Mucosa of descending colon (tissue), 3 donors: ENCODE measurements at regions of chr22 and their contacts with region 1.

Region 1: GRCh38 chr22:30265823-30266444 is 717 bp downstream of the OSM start:
- DNase-seq: peak in 2 of 3 donors; percentile 69 to 89
- ATAC-seq: peak; percentile 71
- H3K4me3 ChIP-seq: no peak overlapping the region
- H3K4me1 ChIP-seq: peaks cover 6% of the 10 kb centered on the region
- CTCF ChIP-seq: no peak

Region 2: DNA sequence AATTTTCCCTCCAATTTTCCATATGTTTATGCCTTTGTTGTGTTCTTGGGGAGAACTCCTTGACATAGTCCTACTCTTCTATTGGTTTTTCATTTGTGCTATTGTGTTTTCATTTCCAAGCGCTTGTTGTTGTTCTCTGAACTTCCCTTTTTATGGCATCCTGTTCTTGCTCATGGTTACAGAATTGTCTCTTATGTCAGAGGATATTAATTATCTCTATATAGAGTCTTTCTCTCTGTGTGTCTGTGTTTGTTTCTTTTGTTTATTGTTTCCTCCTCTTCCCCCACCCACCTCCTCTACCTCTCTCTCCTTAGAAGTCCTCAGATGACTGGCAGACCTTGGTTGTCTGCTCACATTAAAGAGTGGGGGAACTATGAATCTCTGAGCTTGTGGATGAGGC is 115.7 kb before region 1 on chr22:
- intact Hi-C with region 1: no loop called
- DNase-seq: no peak
- ATAC-seq: no peak
- H3K4me3 ChIP-seq: no peak overlapping the region
- H3K4me1 ChIP-seq: no peaks in the 10 kb centered on the region
- CTCF ChIP-seq: no peak

Region 3: GRCh38 chr22:30381264-30381663 is 115.3 kb after region 1 on chr22:
- intact Hi-C with region 1: loop called in 1 of 2 experiments (anchors 5 kb)
- DNase-seq: no peak
- ATAC-seq: no peak
- H3K4me3 ChIP-seq: no peak overlapping the region
- H3K4me1 ChIP-seq: peaks cover 2% of the 10 kb centered on the region
- CTCF ChIP-seq: no peak

Region 4: DNA sequence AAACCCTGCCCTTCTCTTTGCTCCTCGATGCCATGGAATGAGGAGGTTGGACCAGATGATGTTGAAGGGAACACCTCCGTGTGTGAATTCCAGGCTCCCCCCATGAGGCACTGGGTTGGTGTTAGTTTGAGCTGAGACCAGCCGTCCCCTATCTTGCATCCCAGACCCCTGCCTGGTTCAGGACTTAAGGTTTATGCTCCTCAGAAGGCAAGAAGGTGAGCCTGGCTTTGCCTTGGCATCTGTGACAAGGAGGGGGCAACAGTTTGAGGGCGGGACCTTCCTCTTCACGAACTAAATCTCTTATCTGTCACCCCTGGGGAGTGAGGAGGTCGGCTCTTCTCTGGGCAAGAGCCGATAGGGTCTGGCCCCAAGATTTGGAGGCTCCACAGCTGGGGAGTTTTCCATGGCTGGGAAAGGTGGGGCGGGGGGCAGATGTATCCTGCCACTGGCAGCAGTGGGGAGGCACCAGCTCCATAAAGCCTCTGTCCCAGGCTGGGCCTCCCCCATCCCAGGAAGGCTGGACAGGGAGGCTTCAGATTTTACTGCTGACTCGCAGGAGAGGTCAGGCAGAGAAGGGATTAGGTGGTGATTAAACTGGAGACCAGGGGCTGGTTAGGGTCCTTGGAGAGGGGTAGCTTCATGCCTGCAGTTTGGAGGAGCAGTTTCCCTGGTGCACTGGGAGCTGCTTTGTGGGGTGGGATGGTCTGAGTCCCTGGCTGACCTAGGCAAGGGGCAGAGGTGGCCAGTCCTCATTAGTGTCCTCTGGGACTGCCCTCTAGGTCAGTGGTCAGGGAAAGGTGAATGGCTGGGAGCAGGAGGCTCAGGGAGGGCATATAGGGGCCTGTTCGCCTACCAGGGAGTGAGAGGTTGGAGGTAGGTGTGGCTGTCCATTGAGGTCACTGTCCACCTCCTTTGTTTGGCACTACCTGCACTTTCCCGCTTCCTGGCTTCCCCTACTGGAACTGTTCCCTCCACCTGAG is 132.0 kb after region 1 on chr22:
- intact Hi-C with region 1: no loop called
- DNase-seq: no peak
- ATAC-seq: no peak
- H3K4me3 ChIP-seq: no peak overlapping the region
- H3K4me1 ChIP-seq: peaks cover 13% of the 10 kb centered on the region
- CTCF ChIP-seq: no peak

Region 5: GRCh38 chr22:30541961-30542810 is 276.3 kb after region 1 on chr22:
- intact Hi-C with region 1: no loop called
- DNase-seq: no peak
- ATAC-seq: peak; percentile 49
- H3K4me3 ChIP-seq: no peak overlapping the region
- H3K4me1 ChIP-seq: peaks cover 2% of the 10 kb centered on the region
- CTCF ChIP-seq: no peak